ENCODE measurements at regions of chr7 and their contacts with region 1.

Region 1: GRCh38 chr7:25894902-25895791 is 256.9 kb upstream of the NFE2L3 start:
- DNase-seq: peak; percentile 63
- ATAC-seq: peak; percentile 79
- H3K4me3 ChIP-seq: peak overlapping the region; percentile 58
- H3K27ac ChIP-seq: peak overlapping the region; percentile 59
- H3K4me1 ChIP-seq: peaks cover 29% of the 10 kb centered on the region
- H3K27me3 ChIP-seq: no peaks in the 10 kb centered on the region; a peak in 1 of 4 replicates
- CTCF ChIP-seq: peak; percentile 59 to 81 (median 77)
- EP300 ChIP-seq: peak; percentile 81 to 93
- POLR2A ChIP-seq: no peak
- RAD21 ChIP-seq: peak; percentile 53

Region 2: DNA sequence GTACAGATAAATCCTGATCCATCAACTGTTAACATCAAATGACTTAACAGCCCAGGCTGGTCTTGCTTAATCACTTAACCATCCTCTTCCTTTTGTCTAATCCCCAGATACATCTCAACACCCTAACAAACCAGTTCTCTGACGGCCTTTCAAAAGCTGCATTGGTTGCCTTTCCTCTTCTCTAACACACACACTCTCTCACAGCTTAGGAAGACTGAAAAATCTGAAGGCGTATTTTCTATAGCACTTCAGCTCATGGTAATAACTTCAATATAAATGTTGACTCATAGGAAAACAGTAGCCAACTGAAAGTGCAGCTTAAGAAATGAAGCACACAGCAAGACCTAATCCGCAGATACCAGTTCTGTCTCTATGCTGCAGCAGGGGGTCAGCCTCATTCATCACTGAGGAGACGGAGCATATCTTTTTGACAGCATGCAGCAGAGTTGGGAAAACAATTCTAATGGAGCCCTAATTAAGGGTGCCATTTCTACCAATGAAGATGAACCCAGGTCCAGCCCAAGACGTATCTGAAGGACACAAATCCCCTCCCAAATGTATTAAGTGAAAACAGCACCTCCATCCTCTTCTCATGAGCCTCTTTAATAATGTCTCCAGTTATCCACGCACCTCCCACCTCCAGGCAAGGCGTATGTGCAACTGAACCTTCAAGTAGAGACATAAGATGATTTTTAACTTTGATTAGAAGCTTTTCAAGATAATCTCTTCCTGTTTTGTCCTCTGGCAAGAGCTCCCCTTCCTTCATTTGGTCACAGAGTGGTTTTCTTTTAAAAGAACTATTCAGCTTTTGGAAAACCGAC is 45.1 kb after region 1 on chr7:
- CTCF ChIA-PET with region 1: interaction called, 60 read pairs
- POLR2A ChIA-PET with region 1: no interaction called
- RAD21 ChIA-PET with region 1: interaction called, 7 read pairs
- SMC1A ChIA-PET with region 1: interaction called, 11 read pairs
- in situ Hi-C with region 1: no loop called
- intact Hi-C with region 1: no loop called
- DNase-seq: no peak
- ATAC-seq: peak; percentile 19; the same call in 1 of the 3 replicates
- H3K4me3 ChIP-seq: no peak overlapping the region
- H3K27ac ChIP-seq: 0 out of 2 replicates have a peak overlapping the region, but pooled peaks have one; percentile 1
- H3K4me1 ChIP-seq: peaks cover 3% of the 10 kb centered on the region; the same call in 1 of the 2 replicates
- H3K27me3 ChIP-seq: no peaks in the 10 kb centered on the region
- CTCF ChIP-seq: no peak
- EP300 ChIP-seq: no peak
- POLR2A ChIP-seq: no peak
- RAD21 ChIP-seq: no peak

Region 3: GRCh38 chr7:26051021-26051420 is 155.9 kb after region 1 on chr7:
- CTCF ChIA-PET with region 1: interaction called, 264 read pairs
- POLR2A ChIA-PET with region 1: no interaction called
- RAD21 ChIA-PET with region 1: interaction called, 62 read pairs
- SMC1A ChIA-PET with region 1: interaction called, 200 read pairs
- in situ Hi-C with region 1: loop called (anchors 5 kb)
- intact Hi-C with region 1: no loop called
- DNase-seq: no peak
- ATAC-seq: no peak
- H3K4me3 ChIP-seq: no peak overlapping the region
- H3K27ac ChIP-seq: no peak overlapping the region
- H3K4me1 ChIP-seq: no peaks in the 10 kb centered on the region
- H3K27me3 ChIP-seq: no peaks in the 10 kb centered on the region
- CTCF ChIP-seq: no peak
- EP300 ChIP-seq: no peak
- POLR2A ChIP-seq: no peak
- RAD21 ChIP-seq: no peak

Region 4: DNA sequence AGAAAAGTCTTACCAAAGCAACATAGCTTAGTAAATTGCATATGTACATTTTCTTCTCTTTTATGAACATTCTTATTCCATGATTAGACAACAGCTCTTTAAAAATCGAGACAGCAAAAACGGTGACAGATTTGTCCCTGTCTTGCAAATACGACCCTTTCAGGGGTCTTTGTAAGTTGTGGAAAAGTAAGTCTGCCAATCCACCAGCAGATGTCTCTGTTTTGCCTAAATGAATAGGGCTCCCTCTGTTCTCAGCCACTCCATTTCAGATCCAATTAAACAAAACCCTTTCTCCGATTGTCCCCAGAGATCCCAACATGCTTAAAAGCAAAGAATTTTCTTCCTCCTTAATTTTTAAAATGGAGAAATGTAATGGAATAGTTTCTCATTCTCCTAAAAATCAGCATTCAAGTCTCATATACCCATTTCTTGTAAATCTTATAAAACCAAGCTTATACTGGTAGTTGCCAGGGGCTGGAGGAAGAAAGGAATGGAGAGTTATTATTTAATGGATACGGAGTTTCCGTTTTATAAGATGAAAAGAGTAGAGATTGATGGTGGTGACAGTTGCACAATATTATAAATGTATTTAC is 195.9 kb after region 1 on chr7:
- CTCF ChIA-PET with region 1: interaction called, 44 read pairs
- POLR2A ChIA-PET with region 1: no interaction called
- RAD21 ChIA-PET with region 1: interaction called, 36 read pairs
- SMC1A ChIA-PET with region 1: interaction called, 23 read pairs
- in situ Hi-C with region 1: no loop called
- intact Hi-C with region 1: no loop called
- DNase-seq: peak; percentile 30
- ATAC-seq: peak; percentile 87
- H3K4me3 ChIP-seq: no peak overlapping the region
- H3K27ac ChIP-seq: no peak overlapping the region
- H3K4me1 ChIP-seq: no peaks in the 10 kb centered on the region
- H3K27me3 ChIP-seq: no peaks in the 10 kb centered on the region
- CTCF ChIP-seq: peak; percentile 63 to 73 (median 65)
- EP300 ChIP-seq: no peak
- POLR2A ChIP-seq: no peak
- RAD21 ChIP-seq: peak; percentile 83

Region 5: GRCh38 chr7:26200444-26201246 is 305.5 kb after region 1 on chr7 and contains the start of gene HNRNPA2B1:
- CTCF ChIA-PET with region 1: interaction called, 37 read pairs
- POLR2A ChIA-PET with region 1: interaction called, 6 read pairs
- RAD21 ChIA-PET with region 1: interaction called, 12 read pairs
- SMC1A ChIA-PET with region 1: interaction called, 21 read pairs
- in situ Hi-C with region 1: loop called (anchors 5 kb)
- intact Hi-C with region 1: no loop called
- DNase-seq: peak; percentile 98
- ATAC-seq: peak; percentile 75
- H3K4me3 ChIP-seq: peak within 1 kb of the TSS; percentile 98
- H3K27ac ChIP-seq: peak within 1 kb of the TSS; percentile 96
- H3K4me1 ChIP-seq: 0 out of 2 replicates have a peak, but pooled peaks cover 3% of the 10 kb centered on the region
- H3K27me3 ChIP-seq: no peaks in the 10 kb centered on the region
- CTCF ChIP-seq: no peak
- EP300 ChIP-seq: no peak
- POLR2A ChIP-seq: peak; percentile 100
- RAD21 ChIP-seq: no peak
- polyA plus RNA-seq, gene HNRNPA2B1: 726 to 1,124 TPM

Region 6: DNA sequence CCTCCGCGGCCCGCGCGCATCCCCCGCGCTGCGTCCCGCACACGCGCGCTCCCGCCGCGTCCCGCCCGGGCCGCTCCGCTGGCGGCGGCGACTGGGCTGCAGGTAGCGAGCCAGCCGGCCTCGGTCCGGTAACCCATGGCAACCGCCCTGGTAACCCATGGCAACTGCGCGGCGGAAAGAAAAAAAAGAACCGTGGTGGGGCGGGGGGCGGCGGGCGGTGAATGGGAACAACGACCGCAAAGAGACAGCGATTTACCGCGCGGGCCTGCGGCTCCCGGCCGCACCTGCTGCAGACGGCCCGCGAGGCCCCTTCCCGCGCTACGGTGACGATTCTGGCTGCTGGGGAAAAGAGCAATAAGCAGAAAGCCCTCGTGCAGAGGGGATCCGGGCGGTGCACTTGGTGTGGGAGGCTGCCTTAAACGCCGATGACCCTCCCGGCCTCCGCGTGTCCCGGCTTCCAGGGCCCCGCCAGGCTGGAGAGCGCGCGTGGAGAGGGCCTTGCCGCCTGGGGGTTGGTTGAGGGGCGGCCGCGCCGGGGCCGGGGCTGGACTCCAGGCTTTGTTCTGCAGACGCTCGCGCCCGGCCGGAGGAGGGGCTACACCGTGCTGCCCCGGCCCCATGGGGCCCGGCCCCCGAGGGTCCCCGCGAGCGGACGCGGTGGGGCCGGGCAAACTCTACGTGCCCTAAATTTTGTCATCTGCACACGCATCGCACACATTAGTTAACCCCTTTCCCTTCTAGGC is 481.2 kb after region 1 on chr7:
- CTCF ChIA-PET with region 1: interaction called, 11 read pairs
- POLR2A ChIA-PET with region 1: no interaction called
- RAD21 ChIA-PET with region 1: interaction called, 5 read pairs
- SMC1A ChIA-PET with region 1: interaction called, 12 read pairs
- in situ Hi-C with region 1: no loop called
- intact Hi-C with region 1: no loop called
- DNase-seq: no peak
- ATAC-seq: peak; percentile 71
- H3K4me3 ChIP-seq: peak overlapping the region; percentile 63
- H3K27ac ChIP-seq: no peak overlapping the region
- H3K4me1 ChIP-seq: peaks cover 7% of the 10 kb centered on the region
- H3K27me3 ChIP-seq: no peaks in the 10 kb centered on the region
- CTCF ChIP-seq: no peak
- EP300 ChIP-seq: no peak
- POLR2A ChIP-seq: no peak
- RAD21 ChIP-seq: no peak

Measured in GM12878 (cell line).